ENCODE measurements at regions of chr9 and their contacts with region 1.

Region 1: GRCh38 chr9:71191708-71192107 is 70.3 kb upstream of the TRPM3 start:
- DNase-seq: no peak
- ATAC-seq: no peak
- H3K4me3 ChIP-seq: no peak overlapping the region
- H3K27ac ChIP-seq: no peak overlapping the region
- H3K4me1 ChIP-seq: no peaks in the 10 kb centered on the region
- H3K27me3 ChIP-seq: no peaks in the 10 kb centered on the region
- CTCF ChIP-seq: no peak

Region 2: GRCh38 chr9:71121275-71122021 is 70.3 kb before region 1 on chr9 and contains the start of gene TRPM3:
- CTCF ChIA-PET with region 1: no interaction called
- POLR2A ChIA-PET with region 1: no interaction called
- intact Hi-C with region 1: no loop called
- DNase-seq: no peak
- ATAC-seq: no peak
- H3K4me3 ChIP-seq: no peak within 1 kb of the TSS
- H3K27ac ChIP-seq: no peak within 1 kb of the TSS
- H3K4me1 ChIP-seq: no peaks in the 10 kb centered on the region
- H3K27me3 ChIP-seq: no peaks in the 10 kb centered on the region
- CTCF ChIP-seq: no peak
- total RNA-seq, gene TRPM3: not detected in 2 replicates

Region 3: DNA sequence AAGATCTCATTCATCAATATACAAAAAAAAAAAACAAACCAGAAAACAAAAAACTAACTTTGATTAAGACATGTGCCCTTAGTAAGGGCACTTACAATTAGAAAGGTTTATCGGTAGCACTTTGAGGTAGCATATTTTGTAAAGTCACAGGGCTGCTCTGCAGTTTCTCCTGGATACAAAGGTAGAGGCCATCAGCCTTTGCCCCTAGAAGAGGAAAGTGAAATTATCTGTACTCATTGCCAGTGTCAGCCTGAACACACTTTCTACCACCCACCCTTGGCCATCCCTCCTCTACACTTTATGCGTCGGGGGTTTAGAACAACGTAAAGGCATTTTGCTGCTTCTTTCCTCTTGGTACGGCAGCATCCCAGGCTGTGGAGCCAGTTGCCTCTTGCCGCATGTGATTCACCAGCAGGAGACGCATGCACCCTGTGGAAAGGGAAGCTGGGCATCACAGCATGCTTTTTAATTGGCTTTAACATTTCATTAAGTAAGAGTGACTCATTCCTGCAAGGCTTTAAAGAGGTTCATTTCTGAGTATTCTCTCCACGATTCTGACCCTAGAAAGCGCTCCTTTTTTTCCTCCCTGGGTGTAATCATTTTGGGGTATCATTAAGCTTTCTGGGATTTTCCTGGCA is 492.0 kb after region 1 on chr9:
- CTCF ChIA-PET with region 1: no interaction called
- POLR2A ChIA-PET with region 1: no interaction called
- intact Hi-C with region 1: no loop called
- DNase-seq: peak; percentile 46
- ATAC-seq: peak; percentile 15; the same call in 1 of the 2 replicates
- H3K4me3 ChIP-seq: no peak overlapping the region
- H3K27ac ChIP-seq: no peak overlapping the region
- H3K4me1 ChIP-seq: peaks cover 69% of the 10 kb centered on the region
- H3K27me3 ChIP-seq: no peaks in the 10 kb centered on the region
- CTCF ChIP-seq: peak; percentile 47

Region 4: DNA sequence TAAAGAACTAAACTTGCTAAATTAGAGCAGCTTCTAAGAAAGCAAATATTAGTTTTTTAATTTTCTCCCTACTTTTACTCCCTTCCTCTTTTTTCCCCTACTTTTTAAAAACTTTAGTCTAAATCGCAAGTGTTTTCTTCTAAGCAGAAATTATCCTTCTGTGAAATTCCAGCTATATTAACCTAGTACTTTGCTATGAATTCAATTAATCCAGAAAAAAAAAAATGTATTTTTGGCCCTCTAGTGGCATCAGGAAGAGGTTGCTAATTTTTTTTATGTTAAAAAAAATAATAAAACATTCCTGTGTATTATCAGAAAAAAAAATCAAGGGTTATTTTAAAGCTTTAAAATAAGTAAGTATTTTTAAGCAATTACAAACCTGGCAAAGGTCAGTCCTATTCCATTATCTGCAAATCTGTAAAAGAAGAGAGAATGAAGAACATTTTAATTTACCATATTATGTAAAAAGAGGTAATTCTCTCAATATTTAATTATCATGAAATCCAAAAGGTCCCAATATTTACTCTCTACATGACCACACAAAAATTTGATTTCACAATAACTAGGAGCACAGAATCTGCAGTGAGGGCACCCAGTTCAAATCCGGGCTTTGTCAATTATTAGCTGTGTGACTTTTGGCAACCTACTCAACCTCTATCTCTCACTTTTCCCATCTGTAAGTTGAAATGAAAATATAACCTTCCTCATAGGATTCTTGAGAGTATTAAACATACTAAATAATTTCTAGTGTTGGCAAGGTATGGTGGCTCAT is 524.6 kb after region 1 on chr9:
- CTCF ChIA-PET with region 1: interaction called, 11 read pairs
- POLR2A ChIA-PET with region 1: no interaction called
- intact Hi-C with region 1: no loop called
- DNase-seq: peak; percentile 21
- ATAC-seq: no peak
- H3K4me3 ChIP-seq: no peak overlapping the region
- H3K27ac ChIP-seq: no peak overlapping the region
- H3K4me1 ChIP-seq: no peaks in the 10 kb centered on the region
- H3K27me3 ChIP-seq: no peaks in the 10 kb centered on the region
- CTCF ChIP-seq: peak; percentile 69; the same call in 1 of the 2 replicates